Natural killer cell (primary cell): ENCODE measurements at regions of chr7 and their contacts with region 1.

Region 1: DNA sequence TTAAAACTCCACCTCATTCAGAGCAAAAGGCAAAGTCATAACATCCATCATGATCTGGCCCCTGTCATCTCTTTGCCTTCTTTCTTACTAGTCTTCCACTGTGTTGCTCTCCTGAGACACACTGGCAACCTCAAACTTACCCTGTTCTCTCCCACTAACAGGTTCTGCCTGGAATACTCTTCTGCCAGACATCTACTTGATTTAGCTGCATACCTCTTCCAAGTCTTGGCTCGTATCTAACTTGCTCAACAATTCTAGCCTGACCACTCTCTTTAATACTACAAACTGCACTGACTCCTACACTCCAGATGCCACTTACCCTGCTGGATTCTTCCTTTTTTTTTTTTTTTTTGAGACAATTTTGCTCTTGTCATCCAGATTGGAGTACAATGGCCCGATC is 167.0 kb upstream of the MTPN start:
- DNase-seq: no peak
- ATAC-seq: no peak
- H3K4me3 ChIP-seq: no peak overlapping the region
- H3K4me3 Mint-ChIP-seq: no peak overlapping the region
- H3K27ac ChIP-seq: no peak overlapping the region
- H3K27ac Mint-ChIP-seq: no peak overlapping the region
- H3K4me1 ChIP-seq: no peaks in the 10 kb centered on the region
- H3K4me1 Mint-ChIP-seq: no peaks in the 10 kb centered on the region
- H3K27me3 ChIP-seq: no peaks in the 10 kb centered on the region
- H3K27me3 Mint-ChIP-seq: no peaks in the 10 kb centered on the region
- CTCF ChIP-seq: no peak

Region 2: GRCh38 chr7:136174477-136175125 is 30.4 kb after region 1 on chr7:
- intact Hi-C with region 1: loop called (anchors 1 kb)
- DNase-seq: no peak
- ATAC-seq: no peak
- H3K4me3 ChIP-seq: no peak overlapping the region
- H3K4me3 Mint-ChIP-seq: no peak overlapping the region
- H3K27ac ChIP-seq: no peak overlapping the region
- H3K27ac Mint-ChIP-seq: no peak overlapping the region
- H3K4me1 ChIP-seq: no peaks in the 10 kb centered on the region
- H3K4me1 Mint-ChIP-seq: peaks cover 0 to 8% of the 10 kb centered on the region in 2 donors
- H3K27me3 ChIP-seq: no peaks in the 10 kb centered on the region
- H3K27me3 Mint-ChIP-seq: no peaks in the 10 kb centered on the region
- CTCF ChIP-seq: no peak

Region 3: GRCh38 chr7:136194878-136195277 is 50.7 kb after region 1 on chr7:
- intact Hi-C with region 1: no loop called
- DNase-seq: no peak
- ATAC-seq: no peak
- H3K4me3 ChIP-seq: no peak overlapping the region
- H3K4me3 Mint-ChIP-seq: no peak overlapping the region
- H3K27ac ChIP-seq: no peak overlapping the region
- H3K27ac Mint-ChIP-seq: no peak overlapping the region
- H3K4me1 ChIP-seq: no peaks in the 10 kb centered on the region
- H3K4me1 Mint-ChIP-seq: peaks cover 0 to 7% of the 10 kb centered on the region in 2 donors
- H3K27me3 ChIP-seq: no peaks in the 10 kb centered on the region
- H3K27me3 Mint-ChIP-seq: no peaks in the 10 kb centered on the region
- CTCF ChIP-seq: no peak